PC-3 (cell line): ENCODE measurements at regions of chr7 and their contacts with region 1.

Region 1: DNA sequence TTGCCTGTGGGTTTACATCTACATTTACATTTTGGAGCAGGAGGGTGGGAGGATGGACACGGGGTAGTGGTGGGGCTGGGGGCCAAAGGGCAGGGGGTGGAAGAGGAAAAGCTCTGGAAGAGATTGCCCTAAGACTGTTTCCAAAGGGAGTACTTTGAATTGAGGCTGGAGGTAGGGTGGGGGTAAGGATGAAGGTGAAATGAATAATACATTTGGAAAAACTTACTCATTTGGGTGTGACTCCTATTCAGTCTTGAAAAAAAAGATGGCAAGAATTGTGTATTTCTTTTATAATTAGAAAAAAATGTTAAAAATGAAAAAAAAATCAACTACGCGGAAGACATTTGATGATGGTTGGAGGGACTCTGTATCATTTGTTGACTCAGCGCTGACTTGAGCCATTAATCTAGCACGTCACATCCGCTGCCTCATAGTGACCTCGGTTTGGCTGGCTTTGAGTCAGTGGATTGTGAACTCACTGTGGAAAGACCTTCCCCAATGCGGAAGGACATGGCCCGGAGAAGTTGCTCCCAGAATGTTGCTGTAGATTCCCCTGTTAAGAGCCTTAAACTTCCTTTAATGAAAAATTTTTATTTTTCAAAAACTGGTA is 2.8 kb downstream of the FAM180A start:
- DNase-seq: peak; percentile 95
- ATAC-seq: peak; percentile 82
- H3K4me3 ChIP-seq: peak overlapping the region; percentile 48
- H3K27ac ChIP-seq: peak overlapping the region; percentile 99
- H3K4me1 ChIP-seq: peaks cover 29% of the 10 kb centered on the region
- H3K27me3 ChIP-seq: no peaks in the 10 kb centered on the region
- CTCF ChIP-seq: no peak

Region 2: GRCh38 chr7:135385209-135385608 is 360.6 kb before region 1 on chr7:
- CTCF ChIA-PET with region 1: no interaction called
- POLR2A ChIA-PET with region 1: no interaction called
- intact Hi-C with region 1: no loop called
- DNase-seq: peak; percentile 5
- ATAC-seq: no peak
- H3K4me3 ChIP-seq: no peak overlapping the region
- H3K27ac ChIP-seq: no peak overlapping the region
- H3K4me1 ChIP-seq: peaks cover 3% of the 10 kb centered on the region; the same call in 1 of the 2 replicates
- H3K27me3 ChIP-seq: no peaks in the 10 kb centered on the region
- CTCF ChIP-seq: no peak

Region 3: DNA sequence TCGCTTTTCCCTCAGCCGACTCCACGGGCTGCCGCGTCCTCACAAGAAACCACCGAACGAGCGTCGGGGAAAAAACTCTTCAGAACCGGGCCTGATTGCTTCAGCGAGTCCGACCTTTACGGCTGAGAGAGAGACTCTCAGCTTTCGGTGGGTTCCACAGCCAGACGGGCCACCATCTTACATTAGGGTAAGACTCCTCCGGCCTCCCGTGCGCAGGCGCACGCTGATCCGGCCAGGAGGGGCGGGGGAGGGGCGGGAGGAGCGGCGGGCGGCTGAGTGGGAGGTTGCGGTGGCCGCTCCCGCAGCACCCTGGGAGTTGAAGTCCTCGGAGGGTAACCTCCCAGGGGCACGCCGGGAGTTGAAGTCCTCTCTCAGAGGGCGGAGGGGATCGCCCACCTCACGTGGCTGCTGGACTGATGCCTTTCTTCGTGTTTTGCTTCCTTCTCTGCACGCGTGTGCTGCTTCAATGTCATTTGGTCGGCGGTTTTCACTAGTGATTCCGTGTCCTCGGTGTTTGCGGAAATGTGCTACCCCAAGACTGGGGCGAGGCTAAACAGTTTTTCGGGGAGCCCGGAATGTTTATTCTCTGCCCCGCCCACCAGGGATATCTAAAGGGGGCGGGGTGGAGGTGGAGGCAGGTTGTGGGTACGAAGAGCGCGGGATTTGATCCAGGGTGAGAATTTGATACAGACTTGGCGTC is 235.8 kb before region 1 on chr7 and contains the start of gene CNOT4:
- CTCF ChIA-PET with region 1: no interaction called
- POLR2A ChIA-PET with region 1: no interaction called
- intact Hi-C with region 1: no loop called
- DNase-seq: peak; percentile 93
- ATAC-seq: peak; percentile 91
- H3K4me3 ChIP-seq: peak within 1 kb of the TSS; percentile 84
- H3K27ac ChIP-seq: peak within 1 kb of the TSS; percentile 53; the same call in 1 of the 2 replicates
- H3K4me1 ChIP-seq: peaks cover 22% of the 10 kb centered on the region
- H3K27me3 ChIP-seq: no peaks in the 10 kb centered on the region
- CTCF ChIP-seq: no peak
- total RNA-seq, gene CNOT4: 8.4 and 9.7 TPM in 2 replicates

Region 4: DNA sequence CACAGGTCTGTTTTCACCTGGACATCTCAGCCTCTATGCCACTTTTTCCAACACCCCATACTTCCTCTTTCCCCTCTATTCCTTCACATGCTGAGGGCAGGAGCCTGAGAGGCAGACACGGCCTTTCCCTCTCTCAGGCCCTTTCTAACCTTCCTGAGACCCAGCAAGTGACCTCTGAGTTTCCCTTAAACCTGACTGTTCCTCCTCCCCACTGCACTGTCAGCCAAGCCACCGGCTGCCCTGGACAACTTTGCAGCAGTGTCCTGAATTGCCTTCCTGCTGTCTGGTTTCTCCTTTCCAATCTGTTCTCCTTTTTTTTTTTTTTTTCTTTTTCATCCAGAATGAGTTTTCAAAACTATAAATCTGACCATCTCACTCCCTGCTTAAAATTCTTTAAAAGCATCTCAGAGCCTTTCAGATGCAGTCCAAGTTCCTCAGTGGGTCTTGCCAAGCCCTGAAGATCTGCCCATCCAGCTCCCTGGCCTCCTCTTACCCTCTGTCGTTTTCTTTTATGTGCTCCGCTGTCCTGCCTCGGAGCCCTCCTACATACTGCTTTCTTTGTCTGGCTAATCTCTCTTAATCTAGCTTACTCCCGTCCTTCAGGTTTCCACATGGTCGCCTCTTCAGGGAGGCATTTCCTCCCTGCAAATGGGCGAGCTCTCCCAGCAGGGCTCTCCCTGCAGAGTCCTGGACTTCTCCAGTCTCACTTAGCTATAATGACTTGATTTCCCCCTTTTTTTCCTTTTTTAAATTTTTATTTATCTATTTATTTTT is 48.3 kb before region 1 on chr7:
- CTCF ChIA-PET with region 1: no interaction called
- POLR2A ChIA-PET with region 1: no interaction called
- intact Hi-C with region 1: no loop called
- DNase-seq: no peak
- ATAC-seq: no peak
- H3K4me3 ChIP-seq: no peak overlapping the region
- H3K27ac ChIP-seq: no peak overlapping the region
- H3K4me1 ChIP-seq: no peaks in the 10 kb centered on the region; the same call in 1 of the 2 replicates
- H3K27me3 ChIP-seq: no peaks in the 10 kb centered on the region
- CTCF ChIP-seq: no peak

Region 5: GRCh38 chr7:135771961-135772638 is 26.3 kb after region 1 on chr7:
- CTCF ChIA-PET with region 1: no interaction called
- POLR2A ChIA-PET with region 1: no interaction called
- intact Hi-C with region 1: loop called (anchors 1 kb)
- DNase-seq: peak; percentile 46
- ATAC-seq: no peak; the same call in 1 of the 2 replicates
- H3K4me3 ChIP-seq: no peak overlapping the region
- H3K27ac ChIP-seq: no peak overlapping the region
- H3K4me1 ChIP-seq: peaks cover 19% of the 10 kb centered on the region
- H3K27me3 ChIP-seq: no peaks in the 10 kb centered on the region
- CTCF ChIP-seq: no peak

Region 6: GRCh38 chr7:135795846-135796570 is 50.2 kb after region 1 on chr7:
- CTCF ChIA-PET with region 1: no interaction called
- POLR2A ChIA-PET with region 1: no interaction called
- intact Hi-C with region 1: loop called (anchors 2 kb)
- DNase-seq: no peak
- ATAC-seq: no peak
- H3K4me3 ChIP-seq: no peak overlapping the region
- H3K27ac ChIP-seq: no peak overlapping the region
- H3K4me1 ChIP-seq: no peaks in the 10 kb centered on the region
- H3K27me3 ChIP-seq: no peaks in the 10 kb centered on the region
- CTCF ChIP-seq: no peak

Region 7: GRCh38 chr7:135808206-135808605 is 62.4 kb after region 1 on chr7:
- CTCF ChIA-PET with region 1: no interaction called
- POLR2A ChIA-PET with region 1: interaction called, 14 read pairs
- intact Hi-C with region 1: no loop called
- DNase-seq: no peak
- ATAC-seq: no peak
- H3K4me3 ChIP-seq: no peak overlapping the region
- H3K27ac ChIP-seq: no peak overlapping the region
- H3K4me1 ChIP-seq: no peaks in the 10 kb centered on the region
- H3K27me3 ChIP-seq: 0 out of 2 replicates have a peak, but pooled peaks cover 5% of the 10 kb centered on the region
- CTCF ChIP-seq: no peak

Region 8: DNA sequence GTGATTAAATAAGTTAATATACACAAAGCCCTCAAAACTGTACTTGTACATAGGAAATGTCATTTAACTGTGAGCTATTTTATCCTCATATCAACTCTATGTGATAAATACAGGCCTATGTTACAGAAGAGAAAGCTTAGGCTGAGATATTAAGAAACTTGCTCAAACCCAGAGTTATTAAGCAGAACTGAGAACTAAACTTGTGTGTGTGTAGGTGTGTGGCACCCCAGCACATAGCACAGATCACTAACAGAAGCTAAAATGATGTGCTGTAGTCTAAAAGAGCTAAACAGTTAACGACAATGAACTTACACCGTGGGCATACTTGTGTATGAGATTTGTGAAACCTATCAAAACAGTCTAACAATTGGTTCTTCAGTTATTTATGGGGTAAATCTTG is 196.8 kb after region 1 on chr7:
- CTCF ChIA-PET with region 1: no interaction called
- POLR2A ChIA-PET with region 1: no interaction called
- intact Hi-C with region 1: no loop called
- DNase-seq: no peak
- ATAC-seq: no peak
- H3K4me3 ChIP-seq: no peak overlapping the region
- H3K27ac ChIP-seq: no peak overlapping the region
- H3K4me1 ChIP-seq: no peaks in the 10 kb centered on the region
- H3K27me3 ChIP-seq: no peaks in the 10 kb centered on the region
- CTCF ChIP-seq: no peak